ENCODE measurements at regions of chr3 and their contacts with region 1.

Region 1: DNA sequence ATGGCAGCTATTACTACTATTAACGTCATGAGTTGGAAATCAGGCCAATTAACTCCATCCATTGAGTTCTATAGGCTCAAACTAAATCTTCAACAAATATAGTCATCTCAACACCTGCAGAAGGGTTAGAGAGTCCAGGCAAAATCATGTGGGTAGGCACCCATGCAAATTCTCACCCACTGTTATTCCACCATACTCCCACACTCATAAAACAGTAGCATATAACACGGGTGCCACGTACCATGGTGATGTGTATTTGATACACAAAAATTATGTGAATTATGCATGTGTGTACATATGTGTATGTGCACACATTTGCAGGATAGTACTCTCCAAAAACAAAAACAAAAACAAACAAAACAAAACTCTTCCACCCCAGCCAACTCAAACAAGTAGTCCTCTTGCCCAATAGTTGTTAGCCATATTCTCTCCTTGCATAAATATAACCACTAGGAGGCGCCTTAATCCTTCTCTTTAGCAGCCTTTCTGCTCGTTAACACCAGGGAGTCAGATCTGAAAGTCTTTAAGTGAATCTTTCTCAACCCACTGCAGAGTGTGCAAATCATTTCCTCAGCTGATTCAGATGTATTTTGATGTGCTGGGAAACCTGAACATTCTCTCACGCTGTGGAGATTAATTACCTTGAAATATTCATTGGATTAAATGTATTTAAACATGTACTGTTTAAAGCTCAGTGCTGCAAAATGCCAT is 38.0 kb upstream of the COPB2 start:
- DNase-seq: peak; percentile 24
- H3K4me3 ChIP-seq: no peak overlapping the region
- H3K27me3 ChIP-seq: no peaks in the 10 kb centered on the region
- CTCF ChIP-seq: peak; percentile 72

Region 2: GRCh38 chr3:139389458-139390209 is 37.8 kb before region 1 on chr3 and contains the start of gene COPB2:
- CTCF ChIA-PET with region 1: interaction called, 11 read pairs
- POLR2A ChIA-PET with region 1: no interaction called
- DNase-seq: peak; percentile 97
- H3K4me3 ChIP-seq: peak within 1 kb of the TSS; percentile 73
- H3K27me3 ChIP-seq: no peaks in the 10 kb centered on the region; the same call in 1 of the 2 replicates
- CTCF ChIP-seq: no peak
- polyA plus RNA-seq, gene COPB2: 112 and 212 TPM in 2 replicates

Region 3: GRCh38 chr3:139561959-139562676 is 134.7 kb after region 1 on chr3:
- CTCF ChIA-PET with region 1: interaction called, 20 read pairs
- POLR2A ChIA-PET with region 1: no interaction called
- DNase-seq: no peak
- H3K4me3 ChIP-seq: no peak overlapping the region
- H3K27me3 ChIP-seq: no peaks in the 10 kb centered on the region
- CTCF ChIP-seq: peak; percentile 53

Measured in BJ (cell line).